GM12878 (cell line): ENCODE measurements at regions of chr3 and their contacts with region 1.

Region 1: GRCh38 chr3:197002701-197003454 is 26.7 kb downstream of the MELTF start:
- DNase-seq: no peak
- ATAC-seq: peak; percentile 78
- H3K4me3 ChIP-seq: peak overlapping the region; percentile 71
- H3K27ac ChIP-seq: peak overlapping the region; percentile 70
- H3K4me1 ChIP-seq: peaks cover 9% of the 10 kb centered on the region
- H3K27me3 ChIP-seq: no peaks in the 10 kb centered on the region
- CTCF ChIP-seq: peak; percentile 48 to 76 (median 66); a peak in 5 of 6 replicates
- EP300 ChIP-seq: no peak
- POLR2A ChIP-seq: peak; percentile 49
- RAD21 ChIP-seq: peak; percentile 74

Region 2: GRCh38 chr3:196287440-196288148 is 715.3 kb before region 1 on chr3 and contains the start of gene PCYT1A:
- CTCF ChIA-PET with region 1: no interaction called
- POLR2A ChIA-PET with region 1: no interaction called
- RAD21 ChIA-PET with region 1: no interaction called
- SMC1A ChIA-PET with region 1: no interaction called
- in situ Hi-C with region 1: no loop called
- intact Hi-C with region 1: no loop called
- DNase-seq: peak; percentile 66
- ATAC-seq: peak; percentile 84
- H3K4me3 ChIP-seq: peak within 1 kb of the TSS; percentile 79
- H3K27ac ChIP-seq: peak within 1 kb of the TSS; percentile 94
- H3K4me1 ChIP-seq: peaks cover 7% of the 10 kb centered on the region
- H3K27me3 ChIP-seq: no peaks in the 10 kb centered on the region
- CTCF ChIP-seq: no peak
- EP300 ChIP-seq: peak in 1 of 2 experiments; percentile 38; a peak in 1 of 4 replicates
- POLR2A ChIP-seq: peak; percentile 90
- RAD21 ChIP-seq: no peak
- polyA plus RNA-seq, gene PCYT1A: 10.8 to 15.3 TPM

Region 3: DNA sequence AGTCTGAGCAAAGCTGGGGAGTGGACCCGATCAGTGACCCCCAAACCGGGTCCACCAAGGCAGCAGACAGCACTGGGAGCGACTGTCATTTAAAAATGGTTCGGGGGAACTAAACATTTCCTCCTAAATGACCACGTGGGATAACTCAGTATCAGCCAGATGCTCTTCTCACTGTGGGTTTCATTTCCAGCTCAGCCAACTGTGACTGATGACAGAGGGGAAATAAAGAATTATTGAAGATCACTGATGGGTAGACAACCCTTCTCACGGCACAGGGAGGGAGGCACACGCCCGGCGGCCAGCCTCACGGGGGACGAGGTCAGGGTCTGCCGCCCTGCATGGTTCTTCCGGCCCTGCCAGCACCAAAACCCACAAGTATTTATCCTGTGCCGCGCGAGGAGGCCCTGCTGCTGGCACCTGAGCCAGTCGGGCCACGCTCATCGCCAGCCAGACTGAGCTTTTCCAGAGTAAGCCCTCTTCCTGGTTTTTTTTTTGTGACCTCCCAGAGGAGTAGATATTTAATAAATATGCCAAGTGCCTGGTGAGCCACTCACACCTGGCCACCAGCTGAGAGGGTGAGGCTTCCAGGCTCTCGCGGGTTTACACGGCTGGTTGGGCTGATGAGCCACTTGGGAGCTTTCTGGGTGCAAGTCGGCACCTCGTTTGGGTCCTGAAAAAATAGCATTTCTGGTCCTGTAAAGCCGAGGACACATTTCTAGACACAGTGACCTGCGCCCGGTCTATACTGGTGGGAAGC is 20.5 kb after region 1 on chr3:
- CTCF ChIA-PET with region 1: interaction called, 45 read pairs
- POLR2A ChIA-PET with region 1: interaction called, 24 read pairs
- RAD21 ChIA-PET with region 1: interaction called, 48 read pairs
- SMC1A ChIA-PET with region 1: interaction called, 33 read pairs
- in situ Hi-C with region 1: no loop called
- intact Hi-C with region 1: no loop called
- DNase-seq: peak; percentile 76
- ATAC-seq: peak; percentile 78
- H3K4me3 ChIP-seq: peak overlapping the region; percentile 24; the same call in 1 of the 2 replicates
- H3K27ac ChIP-seq: peak overlapping the region; percentile 61
- H3K4me1 ChIP-seq: peaks cover 22% of the 10 kb centered on the region
- H3K27me3 ChIP-seq: no peaks in the 10 kb centered on the region
- CTCF ChIP-seq: no peak
- EP300 ChIP-seq: no peak
- POLR2A ChIP-seq: no peak
- RAD21 ChIP-seq: no peak

Region 4: GRCh38 chr3:197181741-197182140 is 178.9 kb after region 1 on chr3:
- CTCF ChIA-PET with region 1: interaction called, 35 read pairs
- POLR2A ChIA-PET with region 1: no interaction called
- RAD21 ChIA-PET with region 1: interaction called, 3 read pairs
- SMC1A ChIA-PET with region 1: interaction called, 5 read pairs
- in situ Hi-C with region 1: no loop called
- intact Hi-C with region 1: no loop called
- DNase-seq: no peak
- ATAC-seq: no peak
- H3K4me3 ChIP-seq: no peak overlapping the region
- H3K27ac ChIP-seq: no peak overlapping the region
- H3K4me1 ChIP-seq: peaks cover 3% of the 10 kb centered on the region; the same call in 1 of the 2 replicates
- H3K27me3 ChIP-seq: no peaks in the 10 kb centered on the region
- CTCF ChIP-seq: no peak
- EP300 ChIP-seq: no peak
- POLR2A ChIP-seq: no peak
- RAD21 ChIP-seq: no peak